ENCODE measurements at regions of chr9 and their contacts with region 1.

Region 1: GRCh38 chr9:77475641-77476473 is 172.3 kb downstream of the GNA14 start:
- DNase-seq: peak; percentile 84
- ATAC-seq: peak; percentile 99
- H3K4me3 Mint-ChIP-seq: peak overlapping the region; percentile 9
- H3K27ac Mint-ChIP-seq: peak overlapping the region; percentile 94
- H3K4me1 Mint-ChIP-seq: peaks cover 31% of the 10 kb centered on the region
- H3K27me3 Mint-ChIP-seq: no peaks in the 10 kb centered on the region

Region 2: DNA sequence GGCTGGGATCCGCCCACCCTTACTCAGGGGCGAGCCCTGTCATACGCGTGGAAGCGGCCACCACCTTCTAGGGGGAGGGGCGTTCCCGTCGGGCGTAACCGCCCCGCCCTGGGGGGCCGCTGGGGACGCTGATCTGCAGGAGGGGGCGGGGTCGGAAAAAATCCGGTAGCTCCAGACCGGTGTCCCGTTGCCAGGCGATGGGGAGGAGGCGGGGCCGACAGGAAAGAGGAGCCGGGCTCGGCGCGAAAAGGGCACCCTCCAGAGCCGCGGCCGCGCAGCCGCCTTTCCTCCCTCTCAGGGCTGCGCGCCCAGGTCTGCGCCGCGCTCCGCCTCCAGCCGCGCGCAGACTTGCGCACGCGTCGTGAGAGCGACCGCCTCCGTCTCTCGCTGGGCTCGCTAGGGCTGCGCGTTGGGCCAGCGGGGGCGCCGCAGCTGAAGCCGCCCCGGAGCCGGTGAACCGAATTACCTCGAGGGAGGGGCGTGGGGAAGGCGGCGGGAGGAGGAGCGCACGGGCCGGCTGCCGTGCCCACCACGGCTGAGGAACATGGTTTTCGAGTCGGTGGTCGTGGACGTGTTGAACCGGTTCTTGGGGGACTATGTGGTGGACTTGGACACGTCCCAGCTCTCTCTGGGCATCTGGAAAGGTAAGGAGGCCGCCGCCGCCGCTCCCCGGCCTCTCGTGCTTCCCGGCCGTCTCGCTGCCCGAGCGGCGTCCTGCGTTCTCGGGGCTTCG is 298.5 kb before region 1 on chr9 and contains the start of gene VPS13A:
- CTCF ChIA-PET with region 1: no interaction called
- POLR2A ChIA-PET with region 1: no interaction called
- intact Hi-C with region 1: loop called in 1 of 2 experiments (anchors 2 kb)
- DNase-seq: peak; percentile 98
- ATAC-seq: peak; percentile 92
- H3K4me3 Mint-ChIP-seq: peak within 1 kb of the TSS; percentile 97
- H3K27ac Mint-ChIP-seq: peak within 1 kb of the TSS; percentile 93
- H3K4me1 Mint-ChIP-seq: peaks cover 23% of the 10 kb centered on the region
- H3K27me3 Mint-ChIP-seq: no peaks in the 10 kb centered on the region
- total RNA-seq, gene VPS13A: 33.3 to 33.6 TPM

Region 3: GRCh38 chr9:77502568-77502967 is 26.7 kb after region 1 on chr9:
- CTCF ChIA-PET with region 1: no interaction called
- POLR2A ChIA-PET with region 1: no interaction called
- intact Hi-C with region 1: no loop called
- DNase-seq: no peak
- ATAC-seq: no peak
- H3K4me3 Mint-ChIP-seq: no peak overlapping the region
- H3K27ac Mint-ChIP-seq: no peak overlapping the region
- H3K4me1 Mint-ChIP-seq: no peaks in the 10 kb centered on the region
- H3K27me3 Mint-ChIP-seq: no peaks in the 10 kb centered on the region

Region 4: GRCh38 chr9:77725820-77726219 is 250.0 kb after region 1 on chr9:
- CTCF ChIA-PET with region 1: interaction called, 3 read pairs
- POLR2A ChIA-PET with region 1: no interaction called
- intact Hi-C with region 1: loop called (anchors 5 kb)
- DNase-seq: peak; percentile 69
- ATAC-seq: peak; percentile 79
- H3K4me3 Mint-ChIP-seq: peak overlapping the region; percentile 22
- H3K27ac Mint-ChIP-seq: peak overlapping the region; percentile 90
- H3K4me1 Mint-ChIP-seq: peaks cover 63% of the 10 kb centered on the region
- H3K27me3 Mint-ChIP-seq: no peaks in the 10 kb centered on the region

Region 5: GRCh38 chr9:77764894-77765780 is 289.3 kb after region 1 on chr9:
- CTCF ChIA-PET with region 1: no interaction called
- POLR2A ChIA-PET with region 1: no interaction called
- intact Hi-C with region 1: loop called in 1 of 2 experiments (anchors 5 kb)
- DNase-seq: no peak
- ATAC-seq: no peak
- H3K4me3 Mint-ChIP-seq: no peak overlapping the region
- H3K27ac Mint-ChIP-seq: no peak overlapping the region
- H3K4me1 Mint-ChIP-seq: peaks cover 10% of the 10 kb centered on the region
- H3K27me3 Mint-ChIP-seq: no peaks in the 10 kb centered on the region

Region 6: GRCh38 chr9:78296893-78297671 is 821.2 kb after region 1 on chr9 and contains the start of gene PSAT1:
- CTCF ChIA-PET with region 1: no interaction called
- POLR2A ChIA-PET with region 1: no interaction called
- intact Hi-C with region 1: loop called in 1 of 2 experiments (anchors 10 kb)
- DNase-seq: peak; percentile 96
- ATAC-seq: peak; percentile 98
- H3K4me3 Mint-ChIP-seq: peak within 1 kb of the TSS; percentile 91
- H3K27ac Mint-ChIP-seq: peak within 1 kb of the TSS; percentile 97
- H3K4me1 Mint-ChIP-seq: peaks cover 29% of the 10 kb centered on the region
- H3K27me3 Mint-ChIP-seq: no peaks in the 10 kb centered on the region
- total RNA-seq, gene PSAT1: 145 to 190 TPM

Measured in activated CD4-positive, alpha-beta T cell treated with anti-CD3 and anti-CD28 coated beads for 36 hours (primary cell).